ENCODE measurements at regions of chrX and their contacts with region 1.

Region 1: DNA sequence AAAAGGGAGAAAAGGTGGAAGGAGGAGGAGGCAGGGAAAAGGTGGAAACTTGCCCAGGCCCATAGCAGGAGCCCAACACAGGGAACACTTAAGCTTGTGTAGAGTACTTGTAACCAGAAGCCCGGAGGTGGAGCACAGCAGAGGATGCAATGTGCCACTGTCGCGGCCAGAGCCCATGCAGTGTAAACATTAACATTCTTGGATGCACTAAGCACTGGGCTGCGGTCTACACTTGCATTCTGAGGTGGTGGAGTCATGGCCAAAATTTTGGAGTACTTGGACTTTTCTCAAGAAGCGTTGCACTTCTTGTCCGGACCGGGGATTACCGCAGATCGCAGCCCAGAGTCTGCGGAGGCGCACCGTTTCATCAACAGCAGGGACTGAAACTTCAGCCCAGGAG is 4.5 kb upstream of the RHOXF1 start:
- DNase-seq: no peak
- H3K4me3 ChIP-seq: no peak overlapping the region
- H3K27ac ChIP-seq: no peak overlapping the region
- H3K4me1 ChIP-seq: no peaks in the 10 kb centered on the region
- H3K27me3 ChIP-seq: no peaks in the 10 kb centered on the region

Region 2: DNA sequence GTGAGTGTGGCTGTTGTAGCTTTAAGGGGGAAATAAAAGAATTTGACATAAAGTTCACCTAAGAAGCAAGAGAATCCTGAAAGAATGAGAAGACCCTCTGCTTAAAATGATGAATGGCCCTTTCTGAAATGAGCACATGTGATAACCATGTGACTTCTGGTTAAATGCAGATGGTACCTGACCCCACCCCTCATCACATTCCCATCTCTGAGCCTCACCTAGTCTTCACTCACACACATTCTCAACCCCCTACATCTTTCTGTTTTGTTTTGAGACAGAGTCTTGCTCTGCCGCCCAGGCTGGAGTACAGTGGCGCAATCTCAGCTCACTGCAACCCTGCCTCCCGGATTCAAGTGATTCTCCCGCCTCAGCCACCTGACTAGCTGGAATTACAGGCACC is 458.7 kb before region 1 on chrX:
- in situ Hi-C with region 1: no loop called
- DNase-seq: no peak
- H3K4me3 ChIP-seq: no peak overlapping the region
- H3K27ac ChIP-seq: no peak overlapping the region
- H3K4me1 ChIP-seq: no peaks in the 10 kb centered on the region
- H3K27me3 ChIP-seq: no peaks in the 10 kb centered on the region

Region 3: GRCh38 chrX:120015145-120016067 is 104.8 kb before region 1 on chrX:
- in situ Hi-C with region 1: loop called (anchors 25 kb)
- DNase-seq: peak; percentile 20
- H3K4me3 ChIP-seq: no peak overlapping the region
- H3K27ac ChIP-seq: no peak overlapping the region
- H3K4me1 ChIP-seq: no peaks in the 10 kb centered on the region
- H3K27me3 ChIP-seq: peaks cover 9% of the 10 kb centered on the region; the same call in 1 of the 2 replicates

Region 4: DNA sequence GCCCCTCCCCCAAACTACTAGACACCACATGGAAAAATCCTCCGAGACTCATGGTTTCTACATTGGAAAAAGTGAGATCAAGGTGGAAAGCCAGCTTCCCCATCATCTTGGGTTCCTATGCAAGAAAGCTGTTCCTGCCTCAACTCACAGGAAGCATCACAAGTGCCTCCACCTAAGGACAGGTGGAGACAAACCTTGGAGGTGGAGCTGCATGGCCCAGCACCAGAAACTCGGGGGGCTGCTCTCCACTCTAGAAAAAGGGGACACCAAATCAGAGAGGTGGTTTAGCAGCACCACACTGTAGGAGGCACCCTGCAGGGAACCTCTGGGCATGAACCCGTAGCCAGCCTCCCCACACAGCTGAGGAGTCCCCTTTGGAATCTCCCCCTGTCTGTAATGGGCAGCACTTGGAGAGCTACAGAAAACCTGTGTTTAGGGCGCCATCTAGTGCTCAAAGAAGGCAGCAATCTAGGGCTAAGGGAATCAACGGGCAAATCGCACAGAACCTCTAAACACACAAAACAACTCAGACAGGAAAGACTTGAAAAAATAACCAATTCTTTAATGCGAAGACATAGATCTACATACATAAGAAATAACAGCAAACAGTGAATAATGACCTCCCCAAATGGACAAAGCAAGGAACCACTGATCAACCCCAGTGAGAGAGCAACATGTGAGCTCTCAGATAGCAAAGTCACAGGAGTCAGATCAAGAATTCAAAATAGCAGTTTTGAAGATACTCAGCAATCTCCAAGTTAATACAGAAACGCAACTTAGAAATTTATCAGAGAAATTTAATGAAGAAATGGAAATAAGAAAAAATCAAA is 93.4 kb after region 1 on chrX:
- in situ Hi-C with region 1: loop called (anchors 25 kb)
- DNase-seq: peak; percentile 57
- H3K4me3 ChIP-seq: no peak overlapping the region
- H3K27ac ChIP-seq: no peak overlapping the region
- H3K4me1 ChIP-seq: no peaks in the 10 kb centered on the region
- H3K27me3 ChIP-seq: no peaks in the 10 kb centered on the region

Region 5: DNA sequence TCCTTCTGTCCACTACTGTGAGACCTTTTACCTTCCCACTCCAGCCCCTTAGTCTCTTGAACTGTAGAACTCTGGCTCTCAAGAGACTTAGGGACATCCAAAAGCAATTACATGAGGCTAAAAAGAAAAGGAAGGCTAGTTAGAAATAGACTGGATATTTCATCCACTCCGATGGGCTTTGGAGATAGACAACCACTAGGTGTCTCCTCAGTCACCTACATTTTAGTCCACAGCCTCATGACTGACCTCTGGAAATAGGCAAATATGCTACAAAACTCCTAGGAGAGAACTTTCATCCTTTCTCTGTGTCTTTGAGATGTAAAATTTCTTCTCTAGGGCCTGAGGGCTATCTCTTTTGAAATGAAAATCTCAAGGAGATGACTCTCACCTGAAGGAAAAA is 394.0 kb after region 1 on chrX:
- in situ Hi-C with region 1: no loop called
- DNase-seq: peak; percentile 31
- H3K4me3 ChIP-seq: no peak overlapping the region
- H3K27ac ChIP-seq: no peak overlapping the region
- H3K4me1 ChIP-seq: peaks cover 12% of the 10 kb centered on the region
- H3K27me3 ChIP-seq: no peaks in the 10 kb centered on the region

Measured in GM23248 (cell line).